ENCODE measurements at regions of chr14 and their contacts with region 1.

Region 1: DNA sequence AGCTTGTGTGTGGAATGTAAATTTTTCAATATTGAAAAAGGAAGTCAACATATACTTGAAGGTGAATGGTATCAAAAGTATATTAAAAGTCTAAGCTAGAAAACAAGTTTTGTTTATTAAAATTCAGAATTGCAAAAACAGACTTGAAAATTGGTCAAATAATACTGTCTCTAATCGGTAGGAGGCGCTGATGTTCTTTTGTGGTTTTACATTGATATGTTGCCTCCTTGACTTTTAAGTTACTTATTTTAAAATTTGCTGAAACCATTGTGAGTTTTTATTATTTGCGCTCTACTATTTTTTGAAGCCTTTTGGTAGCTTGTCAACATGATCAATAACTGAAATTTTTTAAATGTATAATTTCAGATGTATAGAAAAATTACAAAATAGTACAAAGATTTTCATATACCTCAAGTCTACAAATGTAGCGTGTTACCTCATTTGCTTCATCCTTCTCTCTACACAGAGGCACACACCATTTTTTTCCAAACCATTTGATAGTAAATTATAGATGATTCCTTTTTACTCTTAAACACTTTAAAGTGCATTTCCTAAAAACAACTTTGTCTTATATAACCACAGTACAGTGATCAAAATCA is 6.9 kb downstream of the RTRAF start:
- DNase-seq: peak; percentile 72 to 85 (median 76)
- H3K4me3 ChIP-seq: no peak overlapping the region
- H3K27ac ChIP-seq: no peak overlapping the region
- H3K4me1 ChIP-seq: peaks cover 0 to 2% (median under 1%) of the 10 kb centered on the region in 4 experiments
- H3K27me3 ChIP-seq: no peaks in the 10 kb centered on the region

Region 2: DNA sequence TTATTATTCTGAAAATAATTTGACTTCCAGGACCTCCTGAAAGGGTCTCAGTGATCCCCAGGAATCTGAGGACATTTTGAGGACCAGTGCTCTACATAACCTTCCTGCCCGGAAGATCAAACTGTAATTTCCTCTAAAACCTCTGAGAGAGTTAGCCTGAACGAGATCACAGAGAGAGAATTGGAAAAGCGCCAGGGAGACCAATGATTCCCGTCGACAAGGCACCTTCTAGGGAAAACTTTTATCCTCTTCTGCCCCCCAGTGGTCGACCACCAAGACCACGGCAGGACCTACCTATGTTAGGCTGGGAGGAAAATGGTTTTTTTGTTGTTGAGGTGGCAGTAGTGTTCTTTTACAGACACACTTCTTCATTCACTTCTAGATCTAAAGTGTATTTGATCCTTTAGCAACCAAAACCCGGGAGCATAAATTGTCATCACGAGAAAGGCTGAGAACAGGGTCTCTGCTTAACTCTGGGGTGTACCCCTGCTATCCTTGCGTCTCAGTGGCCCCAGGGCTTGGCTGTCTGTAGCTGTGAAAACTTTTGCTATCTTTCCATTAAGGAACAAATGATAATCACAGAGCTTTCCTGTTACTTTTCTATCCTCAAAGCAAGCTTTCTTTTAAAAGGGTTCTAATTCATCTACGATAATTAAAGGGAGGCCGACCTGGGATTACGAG is 135.5 kb after region 1 on chr14:
- CTCF ChIA-PET with region 1: interaction called, 34 read pairs
- POLR2A ChIA-PET with region 1: no interaction called
- DNase-seq: peak; percentile 90 to 95 (median 92)
- H3K4me3 ChIP-seq: peak overlapping the region in 1 of 7 experiments; percentile 16
- H3K27ac ChIP-seq: no peak overlapping the region
- H3K4me1 ChIP-seq: peaks cover 0 to 9% (median 3%) of the 10 kb centered on the region in 4 experiments
- H3K27me3 ChIP-seq: peaks cover 0 to 3% (median 0%) of the 10 kb centered on the region in 5 experiments

Region 3: DNA sequence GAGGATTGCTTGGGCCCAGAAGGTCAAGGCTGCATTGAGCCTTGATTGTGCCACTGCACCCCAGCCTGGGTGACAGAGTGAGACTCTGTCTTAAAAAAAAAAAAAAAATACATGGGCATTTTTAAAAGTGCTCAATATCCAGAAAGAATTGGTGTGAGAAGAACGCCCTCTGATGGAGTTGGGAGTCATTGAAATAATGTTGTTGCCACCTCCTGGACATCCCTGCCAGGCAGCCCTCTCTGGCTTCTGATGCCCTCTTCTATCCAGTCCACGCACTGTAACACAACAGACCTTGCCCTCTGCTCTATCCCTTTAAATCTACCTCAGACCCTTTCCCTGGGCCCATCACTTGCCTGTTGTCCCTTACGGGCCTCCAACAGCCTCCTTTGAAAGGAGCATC is 276.1 kb after region 1 on chr14:
- CTCF ChIA-PET with region 1: interaction called, 10 read pairs
- POLR2A ChIA-PET with region 1: no interaction called
- DNase-seq: peak; percentile 51 to 75 (median 73)
- H3K4me3 ChIP-seq: no peak overlapping the region
- H3K27ac ChIP-seq: no peak overlapping the region
- H3K4me1 ChIP-seq: peaks cover 7 to 18% (median 16%) of the 10 kb centered on the region in 4 experiments
- H3K27me3 ChIP-seq: peaks cover 8 to 31% (median 24%) of the 10 kb centered on the region in 5 experiments

Measured in common myeloid progenitor, CD34-positive (primary cell).